Activated CD4-positive, alpha-beta memory T cell treated with anti-CD3 and anti-CD28 coated beads, Interleukin-2, amount 10 ng/mL, durations not matched to agents 7 days and 5 days (primary cell): ENCODE measurements at regions of chr17 and their contacts with region 1.

Region 1: DNA sequence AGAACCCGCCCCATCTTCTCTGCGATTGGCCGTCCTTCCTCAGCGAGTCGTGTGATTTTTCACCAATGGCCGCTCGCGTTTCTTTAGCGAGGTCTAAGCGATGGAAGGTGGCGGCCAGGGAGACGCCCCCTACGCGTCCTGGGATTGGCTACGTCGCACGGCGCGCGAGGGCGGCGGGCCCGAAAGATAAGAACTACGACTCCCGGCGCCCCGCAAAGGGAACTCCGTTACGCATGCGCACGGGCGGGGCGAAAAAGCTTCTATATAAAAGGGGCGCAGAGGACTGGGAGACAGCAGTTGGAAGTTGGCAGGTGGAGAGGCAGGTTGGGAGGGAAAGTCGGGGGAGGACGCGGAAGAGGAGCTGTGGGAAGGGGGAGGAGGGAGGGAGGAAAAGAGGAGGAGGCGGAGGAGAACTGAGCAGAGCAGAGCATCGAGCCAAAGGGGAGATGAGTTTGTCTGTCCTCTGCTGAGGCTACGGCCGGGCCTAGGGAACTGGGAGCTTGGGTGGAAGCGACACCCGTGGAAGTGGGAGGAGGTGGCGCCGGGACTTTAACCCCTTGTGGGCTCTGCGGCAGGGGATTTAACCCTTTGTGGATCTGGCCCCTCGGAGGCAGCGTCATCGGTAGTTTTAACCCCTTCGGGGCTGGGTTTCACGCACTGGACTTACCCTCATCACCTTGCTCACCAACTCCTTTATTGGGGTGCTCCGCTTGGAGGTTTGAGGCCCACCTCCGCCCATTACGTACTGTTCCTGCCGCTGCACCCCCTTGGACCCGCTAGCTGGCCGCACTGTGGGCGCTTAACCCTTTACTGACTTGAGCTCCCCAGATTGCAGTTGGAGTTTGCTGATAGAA is at the start of gene HEXIM1:
- DNase-seq: peak; percentile 99
- H3K4me3 Mint-ChIP-seq: peak within 1 kb of the TSS; percentile 97
- H3K27ac Mint-ChIP-seq: peak within 1 kb of the TSS; percentile 98
- H3K4me1 Mint-ChIP-seq: peaks cover 45% of the 10 kb centered on the region
- H3K27me3 Mint-ChIP-seq: no peaks in the 10 kb centered on the region
- total RNA-seq, gene HEXIM1: 35.0 to 35.8 TPM

Region 2: DNA sequence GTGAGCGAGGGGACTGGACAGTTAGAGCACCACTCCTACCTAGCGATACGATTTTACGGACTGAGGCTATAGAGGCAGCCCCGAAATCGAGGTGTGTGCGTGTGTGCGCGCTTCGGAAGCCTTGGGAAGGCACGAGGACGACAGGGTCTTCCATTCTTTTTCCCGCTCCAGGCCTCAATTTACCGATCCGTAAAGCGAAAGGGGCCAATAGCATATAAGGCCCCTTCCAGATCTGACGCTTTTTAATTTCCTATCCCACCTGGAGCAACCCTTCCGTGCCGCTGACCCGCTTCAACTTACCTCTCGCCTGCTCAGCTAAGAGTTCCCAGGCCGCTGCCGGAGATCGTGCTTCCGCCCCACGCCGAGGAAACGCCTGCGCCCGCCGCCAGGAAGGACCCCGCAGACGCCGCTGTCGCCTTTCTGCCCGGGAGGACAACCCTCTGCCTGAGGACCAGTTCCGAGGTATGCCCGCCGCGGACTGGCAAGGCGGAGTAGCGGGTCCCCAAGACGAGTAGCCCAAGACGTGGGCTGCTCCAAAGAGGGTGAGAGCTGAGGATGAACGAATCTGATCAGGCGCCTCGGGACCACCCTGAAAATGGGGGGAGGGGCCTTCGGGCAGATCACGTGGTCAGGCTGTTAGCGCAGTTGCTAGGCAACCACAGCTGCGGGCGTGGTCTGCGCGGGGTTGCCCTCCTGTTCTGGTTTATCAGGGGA is 249.2 kb before region 1 on chr17 and contains the start of gene EFTUD2:
- CTCF ChIA-PET with region 1: no interaction called
- POLR2A ChIA-PET with region 1: interaction called, 13 read pairs
- DNase-seq: peak; percentile 92
- H3K4me3 Mint-ChIP-seq: peak within 1 kb of the TSS; percentile 87
- H3K27ac Mint-ChIP-seq: peak within 1 kb of the TSS; percentile 95
- H3K4me1 Mint-ChIP-seq: peaks cover 26% of the 10 kb centered on the region
- H3K27me3 Mint-ChIP-seq: peaks cover 11% of the 10 kb centered on the region
- total RNA-seq, gene EFTUD2: 102 to 114 TPM

Region 3: GRCh38 chr17:45060797-45061605 is 87.4 kb before region 1 on chr17 and contains the start of gene NMT1:
- CTCF ChIA-PET with region 1: interaction called, 3 read pairs
- POLR2A ChIA-PET with region 1: interaction called, 19 read pairs
- DNase-seq: peak; percentile 98
- H3K4me3 Mint-ChIP-seq: peak within 1 kb of the TSS; percentile 89
- H3K27ac Mint-ChIP-seq: peak within 1 kb of the TSS; percentile 96
- H3K4me1 Mint-ChIP-seq: peaks cover 42% of the 10 kb centered on the region
- H3K27me3 Mint-ChIP-seq: no peaks in the 10 kb centered on the region
- total RNA-seq, gene NMT1: 114 TPM

Region 4: GRCh38 chr17:45161019-45161825 is 12.8 kb after region 1 on chr17:
- CTCF ChIA-PET with region 1: interaction called, 198 read pairs
- POLR2A ChIA-PET with region 1: interaction called, 470 read pairs
- DNase-seq: peak; percentile 98
- H3K4me3 Mint-ChIP-seq: peak overlapping the region; percentile 98
- H3K27ac Mint-ChIP-seq: peak overlapping the region; percentile 90
- H3K4me1 Mint-ChIP-seq: peaks cover 46% of the 10 kb centered on the region
- H3K27me3 Mint-ChIP-seq: no peaks in the 10 kb centered on the region

Region 5: GRCh38 chr17:45197555-45198334 is 49.3 kb after region 1 on chr17:
- CTCF ChIA-PET with region 1: interaction called, 90 read pairs
- POLR2A ChIA-PET with region 1: interaction called, 22 read pairs
- DNase-seq: peak; percentile 86
- H3K4me3 Mint-ChIP-seq: no peak overlapping the region
- H3K27ac Mint-ChIP-seq: no peak overlapping the region
- H3K4me1 Mint-ChIP-seq: peaks cover 7% of the 10 kb centered on the region
- H3K27me3 Mint-ChIP-seq: no peaks in the 10 kb centered on the region

Region 6: DNA sequence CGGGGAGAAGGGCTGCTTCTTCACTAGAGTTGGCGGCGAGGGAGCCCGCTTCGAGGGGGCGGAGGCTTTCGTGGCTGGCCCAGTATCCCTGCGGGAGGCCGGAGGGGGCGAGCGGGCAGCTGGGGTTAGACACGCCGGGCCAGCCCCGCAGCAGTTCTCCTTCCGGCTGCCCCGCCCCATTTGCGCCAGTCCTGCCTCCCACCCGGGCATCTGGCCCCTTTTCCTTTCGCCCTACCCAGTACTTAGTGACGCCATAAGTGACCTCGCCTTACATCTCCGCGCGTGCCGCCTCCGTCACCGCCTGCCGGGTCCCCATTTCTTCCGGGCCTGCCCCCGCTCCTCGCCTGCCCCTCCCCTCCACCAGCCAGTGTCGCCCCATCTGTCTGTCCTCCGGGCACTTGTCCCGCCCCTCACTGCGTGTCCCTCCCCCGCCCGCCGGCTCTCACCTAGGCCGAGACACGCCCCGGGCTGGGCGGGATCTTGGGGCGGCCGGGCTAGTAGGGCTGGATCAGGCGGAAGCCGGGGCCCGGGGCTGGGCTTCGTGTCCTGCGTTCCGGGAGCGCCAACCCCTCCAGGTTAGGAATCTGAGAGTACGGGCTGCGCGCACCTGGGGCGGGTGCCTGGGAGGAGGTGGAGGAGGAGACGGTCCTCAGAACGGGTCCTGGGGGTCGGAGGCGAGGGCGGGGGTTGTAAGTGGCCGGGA is 99.2 kb after region 1 on chr17:
- CTCF ChIA-PET with region 1: interaction called, 7 read pairs
- POLR2A ChIA-PET with region 1: interaction called, 25 read pairs
- DNase-seq: peak; percentile 99
- H3K4me3 Mint-ChIP-seq: peak overlapping the region; percentile 87
- H3K27ac Mint-ChIP-seq: peak overlapping the region; percentile 84
- H3K4me1 Mint-ChIP-seq: peaks cover 62% of the 10 kb centered on the region
- H3K27me3 Mint-ChIP-seq: no peaks in the 10 kb centered on the region

Region 7: DNA sequence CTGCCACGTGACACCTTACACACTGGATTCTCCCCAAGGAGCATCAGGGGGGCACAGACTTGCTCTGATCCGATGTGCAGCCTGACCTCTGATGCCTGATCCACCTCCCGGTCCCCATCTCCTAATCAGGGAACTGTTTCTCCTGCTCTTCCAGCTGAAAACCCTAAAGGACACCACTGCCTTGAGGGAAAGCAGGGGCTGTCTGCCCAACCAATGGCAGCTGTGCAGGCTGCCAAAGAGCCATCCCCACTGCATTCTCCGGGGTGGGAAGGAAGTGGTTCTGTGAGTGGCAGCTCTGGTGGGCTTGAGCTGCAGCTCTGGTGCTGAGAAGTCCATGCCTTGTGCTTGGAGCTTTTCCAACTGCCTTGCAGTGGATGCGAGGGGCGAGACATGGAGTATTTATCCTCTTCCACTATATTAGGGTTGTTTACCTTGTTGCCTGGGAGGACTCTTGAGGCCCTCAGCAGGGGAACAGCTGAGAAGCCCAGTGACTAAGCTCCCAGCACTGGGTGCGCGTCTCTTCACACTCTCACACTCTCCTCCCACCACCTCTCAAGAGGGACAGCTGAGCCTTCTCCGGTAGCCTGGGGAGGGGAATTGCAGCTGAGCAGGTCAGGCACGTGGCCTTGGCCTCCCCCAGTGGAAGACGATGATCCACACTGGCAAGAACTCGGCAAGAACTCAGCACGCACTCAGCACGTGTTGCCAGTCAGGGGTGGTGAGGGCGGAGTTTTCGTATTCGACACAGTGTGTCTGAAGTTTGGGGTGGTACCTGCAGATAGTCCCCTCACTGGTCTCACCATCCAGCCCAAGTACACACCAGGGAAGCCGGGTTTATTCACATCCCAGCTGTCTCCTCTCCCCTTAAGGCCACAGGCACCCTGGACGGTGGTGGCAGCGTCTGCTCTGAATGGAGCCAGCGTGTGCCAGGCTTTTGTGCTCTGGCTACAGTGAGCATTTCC is 134.6 kb after region 1 on chr17:
- CTCF ChIA-PET with region 1: no interaction called
- POLR2A ChIA-PET with region 1: no interaction called
- DNase-seq: no peak
- H3K4me3 Mint-ChIP-seq: no peak overlapping the region
- H3K27ac Mint-ChIP-seq: peak overlapping the region; percentile 21
- H3K4me1 Mint-ChIP-seq: peaks cover 13% of the 10 kb centered on the region
- H3K27me3 Mint-ChIP-seq: no peaks in the 10 kb centered on the region

Region 8: GRCh38 chr17:45317112-45317928 is 168.9 kb after region 1 on chr17:
- CTCF ChIA-PET with region 1: interaction called, 6 read pairs
- POLR2A ChIA-PET with region 1: interaction called, 35 read pairs
- DNase-seq: peak; percentile 100
- H3K4me3 Mint-ChIP-seq: peak overlapping the region; percentile 82
- H3K27ac Mint-ChIP-seq: peak overlapping the region; percentile 82
- H3K4me1 Mint-ChIP-seq: peaks cover 73% of the 10 kb centered on the region
- H3K27me3 Mint-ChIP-seq: no peaks in the 10 kb centered on the region